B cell (primary cell): ENCODE measurements at regions of chr2 and their contacts with region 1.

Region 1: GRCh38 chr2:79929624-79930023 is 374.9 kb downstream of the LRRTM1 start:
- DNase-seq: no peak
- ATAC-seq: no peak
- H3K4me3 ChIP-seq: no peak overlapping the region
- H3K4me3 Mint-ChIP-seq: no peak overlapping the region
- H3K27ac ChIP-seq: no peak overlapping the region
- H3K27ac Mint-ChIP-seq: no peak overlapping the region
- H3K4me1 ChIP-seq: no peaks in the 10 kb centered on the region
- H3K4me1 Mint-ChIP-seq: no peaks in the 10 kb centered on the region
- H3K27me3 ChIP-seq: no peaks in the 10 kb centered on the region
- H3K27me3 Mint-ChIP-seq: no peaks in the 10 kb centered on the region
- CTCF ChIP-seq: no peak

Region 2: DNA sequence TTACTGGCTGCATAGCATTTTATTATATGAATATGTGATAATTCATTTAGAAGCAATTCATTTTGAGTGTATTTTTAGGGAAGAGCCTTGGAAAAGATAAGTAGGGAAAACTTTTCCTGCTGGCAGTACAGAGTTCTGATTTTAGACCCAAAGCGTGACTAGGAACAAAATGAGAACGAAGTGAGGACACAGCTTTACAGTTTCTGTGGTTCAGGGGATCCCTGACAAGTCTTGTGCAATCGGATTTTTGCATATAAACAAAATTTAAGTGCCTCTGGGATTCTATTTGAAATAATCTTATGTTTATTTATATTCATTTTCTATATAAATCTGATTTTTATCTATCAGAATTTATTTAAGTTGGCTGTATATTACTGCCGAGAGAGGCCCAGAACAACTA is 14.2 kb before region 1 on chr2:
- CTCF ChIA-PET with region 1: no interaction called
- POLR2A ChIA-PET with region 1: no interaction called
- intact Hi-C with region 1: loop called (anchors 1 kb)
- DNase-seq: no peak
- ATAC-seq: no peak
- H3K4me3 ChIP-seq: no peak overlapping the region
- H3K4me3 Mint-ChIP-seq: no peak overlapping the region
- H3K27ac ChIP-seq: no peak overlapping the region
- H3K27ac Mint-ChIP-seq: no peak overlapping the region
- H3K4me1 ChIP-seq: no peaks in the 10 kb centered on the region
- H3K4me1 Mint-ChIP-seq: no peaks in the 10 kb centered on the region
- H3K27me3 ChIP-seq: no peaks in the 10 kb centered on the region
- H3K27me3 Mint-ChIP-seq: no peaks in the 10 kb centered on the region
- CTCF ChIP-seq: no peak

Region 3: GRCh38 chr2:79960519-79960918 is 30.9 kb after region 1 on chr2:
- CTCF ChIA-PET with region 1: no interaction called
- POLR2A ChIA-PET with region 1: no interaction called
- intact Hi-C with region 1: no loop called
- DNase-seq: no peak
- ATAC-seq: no peak
- H3K4me3 ChIP-seq: no peak overlapping the region
- H3K4me3 Mint-ChIP-seq: no peak overlapping the region
- H3K27ac ChIP-seq: no peak overlapping the region
- H3K27ac Mint-ChIP-seq: no peak overlapping the region
- H3K4me1 ChIP-seq: no peaks in the 10 kb centered on the region
- H3K4me1 Mint-ChIP-seq: no peaks in the 10 kb centered on the region
- H3K27me3 ChIP-seq: no peaks in the 10 kb centered on the region
- H3K27me3 Mint-ChIP-seq: no peaks in the 10 kb centered on the region
- CTCF ChIP-seq: no peak